ENCODE measurements at regions of chr6 and their contacts with region 1.

Region 1: GRCh38 chr6:163533443-163533842 is 118.9 kb downstream of the QKI start:
- DNase-seq: peak in 1 of 2 donors; percentile 57
- ATAC-seq: peak; percentile 87 to 91
- H3K4me3 ChIP-seq: no peak overlapping the region
- H3K27ac ChIP-seq: peak overlapping the region; percentile 75 to 85 (median 82)
- H3K4me1 ChIP-seq: peaks cover 93 to 95% of the 10 kb centered on the region in 2 donors
- H3K27me3 ChIP-seq: no peaks in the 10 kb centered on the region
- CTCF ChIP-seq: no peak
- POLR2A ChIP-seq: no peak

Region 2: GRCh38 chr6:163460307-163460782 is 73.1 kb before region 1 on chr6:
- in situ Hi-C with region 1: no loop called
- intact Hi-C with region 1: loop called (anchors 2 kb)
- DNase-seq: no peak
- ATAC-seq: peak; percentile 5 to 7
- H3K4me3 ChIP-seq: peak overlapping the region; percentile 34 to 56 (median 49)
- H3K27ac ChIP-seq: peak overlapping the region; percentile 76 to 98 (median 80)
- H3K4me1 ChIP-seq: peaks cover 88 to 92% of the 10 kb centered on the region in 2 donors
- H3K27me3 ChIP-seq: no peaks in the 10 kb centered on the region
- CTCF ChIP-seq: no peak
- POLR2A ChIP-seq: no peak

Region 3: GRCh38 chr6:163490826-163491577 is 42.4 kb before region 1 on chr6:
- in situ Hi-C with region 1: no loop called
- intact Hi-C with region 1: loop called (anchors 5 kb)
- DNase-seq: peak; percentile 67 to 83
- ATAC-seq: peak; percentile 65 to 78
- H3K4me3 ChIP-seq: peak overlapping the region in 1 of 4 donors; percentile 17
- H3K27ac ChIP-seq: peak overlapping the region; percentile 76 to 84 (median 78)
- H3K4me1 ChIP-seq: peaks cover 97 to 98% of the 10 kb centered on the region in 2 donors
- H3K27me3 ChIP-seq: no peaks in the 10 kb centered on the region
- CTCF ChIP-seq: no peak
- POLR2A ChIP-seq: no peak

Region 4: GRCh38 chr6:163579880-163580295 is 46.4 kb after region 1 on chr6:
- in situ Hi-C with region 1: no loop called
- intact Hi-C with region 1: loop called (anchors 2 kb)
- DNase-seq: peak; percentile 37 to 62
- ATAC-seq: peak; percentile 71 to 80
- H3K4me3 ChIP-seq: peak overlapping the region in 1 of 4 donors; percentile 19
- H3K27ac ChIP-seq: peak overlapping the region; percentile 81 to 88 (median 86)
- H3K4me1 ChIP-seq: peaks cover 43 to 56% of the 10 kb centered on the region in 2 donors
- H3K27me3 ChIP-seq: no peaks in the 10 kb centered on the region
- CTCF ChIP-seq: peak in 1 of 5 experiments; percentile 10
- POLR2A ChIP-seq: no peak

Region 5: GRCh38 chr6:163600781-163601180 is 67.3 kb after region 1 on chr6:
- in situ Hi-C with region 1: no loop called
- intact Hi-C with region 1: no loop called
- DNase-seq: no peak
- ATAC-seq: no peak
- H3K4me3 ChIP-seq: no peak overlapping the region
- H3K27ac ChIP-seq: no peak overlapping the region
- H3K4me1 ChIP-seq: no peaks in the 10 kb centered on the region
- H3K27me3 ChIP-seq: no peaks in the 10 kb centered on the region
- CTCF ChIP-seq: no peak
- POLR2A ChIP-seq: no peak